ENCODE measurements at regions of chr1 and their contacts with region 1.

Region 1: DNA sequence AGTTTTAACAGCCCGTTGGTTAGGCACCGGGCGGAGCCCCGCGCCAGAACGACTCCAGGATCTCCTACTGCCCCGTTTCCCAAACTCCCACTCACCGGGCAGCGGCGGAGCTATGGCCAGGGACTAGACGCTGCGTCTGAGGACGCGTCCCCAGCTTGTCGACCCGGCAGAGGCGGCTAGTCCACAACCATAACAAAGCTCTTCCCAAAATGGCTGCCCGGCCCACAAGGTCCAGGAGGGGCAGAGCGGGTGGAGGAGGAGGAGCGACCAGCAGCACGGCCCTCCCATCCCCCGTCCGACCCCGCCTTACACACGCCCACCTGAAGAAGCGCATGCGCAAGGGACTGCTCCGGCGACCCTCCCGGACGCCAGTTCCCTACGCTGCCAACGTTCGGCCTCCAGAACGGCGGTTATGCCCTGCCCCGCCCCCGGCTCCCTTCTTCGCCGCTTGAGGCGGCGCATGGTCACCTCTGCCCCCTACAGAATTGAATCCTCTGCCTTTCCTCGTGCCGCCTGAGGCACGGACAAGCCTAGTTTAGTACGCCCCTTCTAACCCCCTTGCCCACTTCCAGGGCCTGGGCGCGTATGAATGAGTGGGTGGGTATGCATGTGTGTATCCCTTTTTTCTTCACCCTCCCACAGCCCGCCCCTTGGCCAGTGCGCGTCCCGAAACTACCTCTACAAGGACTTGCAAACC is at the start of gene GPBP1L1:
- DNase-seq: peak; percentile 97 to 98 (median 97)
- H3K4me3 ChIP-seq: peak within 1 kb of the TSS; percentile 99 to 100
- H3K4me3 Mint-ChIP-seq: peak within 1 kb of the TSS; percentile 95 to 100 (median 99)
- H3K27ac ChIP-seq: peak within 1 kb of the TSS; percentile 94
- H3K27ac Mint-ChIP-seq: peak within 1 kb of the TSS; percentile 98 to 100 (median 100)
- H3K4me1 ChIP-seq: peaks cover 63% of the 10 kb centered on the region
- H3K4me1 Mint-ChIP-seq: peaks cover 28 to 68% (median 46%) of the 10 kb centered on the region in 4 donors
- H3K27me3 ChIP-seq: no peaks in the 10 kb centered on the region
- H3K27me3 Mint-ChIP-seq: no peaks in the 10 kb centered on the region
- total RNA-seq, gene GPBP1L1: 175 to 187 TPM

Region 2: GRCh38 chr1:44674113-44675000 is 1012.1 kb before region 1 on chr1 and contains the starts of genes ARMH1 and TMEM53:
- CTCF ChIA-PET with region 1: no interaction called
- POLR2A ChIA-PET with region 1: interaction called, 3 read pairs
- intact Hi-C with region 1: loop called (anchors 2 kb)
- DNase-seq: peak; percentile 96 to 98 (median 97)
- H3K4me3 ChIP-seq: peak within 1 kb of the TSS; percentile 62 to 95
- H3K4me3 Mint-ChIP-seq: peak within 1 kb of the TSS; percentile 89 to 95 (median 90)
- H3K27ac ChIP-seq: peak within 1 kb of the TSS; percentile 74
- H3K27ac Mint-ChIP-seq: peak within 1 kb of the TSS; percentile 87 to 94 (median 93)
- H3K4me1 ChIP-seq: peaks cover 25% of the 10 kb centered on the region
- H3K4me1 Mint-ChIP-seq: peaks cover 11 to 31% (median 23%) of the 10 kb centered on the region in 4 donors
- H3K27me3 ChIP-seq: no peaks in the 10 kb centered on the region
- H3K27me3 Mint-ChIP-seq: no peaks in the 10 kb centered on the region
- total RNA-seq, gene ARMH1: 64.0 to 74.5 TPM
- total RNA-seq, gene TMEM53: 1.7 to 2.2 TPM

Region 3: DNA sequence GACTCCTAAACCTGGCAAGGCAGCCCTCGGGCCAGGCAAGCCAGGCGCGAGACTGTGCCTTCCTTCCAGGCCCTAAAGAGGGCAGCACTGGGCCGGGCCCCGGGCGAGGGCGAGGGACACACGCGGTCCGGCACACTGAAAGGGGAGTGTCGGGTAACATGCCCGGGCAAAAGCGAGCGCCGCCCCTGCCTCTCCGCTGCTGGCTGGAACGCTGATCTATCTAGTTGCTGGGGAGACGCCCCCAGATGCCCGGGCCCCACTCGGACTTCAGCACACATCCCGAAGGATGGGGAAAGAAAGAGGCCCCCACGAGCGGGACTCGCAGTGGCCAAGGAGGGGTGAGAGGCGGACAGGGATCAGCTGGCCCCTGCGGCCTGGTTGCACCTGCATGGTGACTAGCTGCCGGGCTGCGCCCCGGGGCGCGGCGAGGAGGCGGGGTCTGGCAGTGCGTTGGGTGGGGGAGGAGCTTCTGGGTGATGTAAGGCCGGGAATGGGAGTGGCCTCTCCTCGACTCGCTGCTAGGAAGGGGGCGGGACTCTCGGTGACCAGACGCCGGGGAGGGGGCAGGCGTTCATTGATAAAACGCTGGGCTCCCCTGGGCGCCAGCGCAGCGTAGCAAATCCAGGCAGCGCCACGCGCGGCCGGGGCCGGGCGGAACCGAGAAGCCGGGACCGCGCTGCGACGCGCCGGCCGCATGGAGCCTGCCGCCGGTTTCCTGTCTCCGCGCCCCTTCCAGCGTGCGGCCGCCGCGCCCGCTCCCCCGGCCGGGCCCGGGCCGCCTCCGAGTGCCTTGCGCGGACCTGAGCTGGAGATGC is 886.5 kb before region 1 on chr1 and contains the start of gene PLK3:
- CTCF ChIA-PET with region 1: no interaction called
- POLR2A ChIA-PET with region 1: interaction called, 4 read pairs
- intact Hi-C with region 1: loop called (anchors 5 kb)
- DNase-seq: peak; percentile 99 to 100 (median 99)
- H3K4me3 ChIP-seq: peak within 1 kb of the TSS; percentile 77 to 83
- H3K4me3 Mint-ChIP-seq: peak within 1 kb of the TSS; percentile 89 to 99 (median 96)
- H3K27ac ChIP-seq: peak within 1 kb of the TSS; percentile 96
- H3K27ac Mint-ChIP-seq: peak within 1 kb of the TSS; percentile 82 to 100 (median 99)
- H3K4me1 ChIP-seq: peaks cover 37% of the 10 kb centered on the region
- H3K4me1 Mint-ChIP-seq: peaks cover 23 to 48% (median 31%) of the 10 kb centered on the region in 4 donors
- H3K27me3 ChIP-seq: no peaks in the 10 kb centered on the region
- H3K27me3 Mint-ChIP-seq: no peaks in the 10 kb centered on the region
- total RNA-seq, gene PLK3: 151 to 153 TPM

Region 4: DNA sequence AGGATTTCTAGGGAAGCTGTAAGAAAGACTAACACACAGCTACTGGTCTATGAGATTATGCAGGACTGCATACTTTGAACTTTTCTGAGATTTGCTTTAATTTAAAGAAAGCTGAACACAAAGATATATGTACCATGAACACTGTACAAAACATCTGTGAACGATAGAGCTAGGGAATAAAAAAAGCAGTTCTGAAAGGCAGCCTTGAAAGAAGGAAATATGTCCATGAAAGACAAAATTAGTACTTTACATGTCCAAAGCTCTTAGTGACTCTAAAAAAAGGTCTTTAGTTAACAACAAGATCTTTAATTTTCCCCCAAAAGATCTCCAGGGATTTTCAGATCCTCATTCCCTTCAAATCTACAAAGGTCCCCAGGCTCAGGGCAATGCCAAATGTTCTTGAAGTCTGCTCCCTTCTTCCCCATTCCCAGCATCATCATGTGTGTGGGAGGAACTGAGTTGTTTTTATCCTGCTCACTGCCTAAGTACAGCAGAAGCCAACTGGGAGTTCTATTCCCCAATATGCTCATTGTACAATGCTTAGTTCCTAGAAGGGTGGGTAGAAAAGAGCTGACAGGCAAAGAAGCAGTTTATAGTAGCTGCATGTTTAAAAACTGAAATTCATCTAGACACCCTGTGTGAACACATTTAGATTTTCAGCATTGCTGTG is 783.3 kb before region 1 on chr1:
- CTCF ChIA-PET with region 1: no interaction called
- POLR2A ChIA-PET with region 1: no interaction called
- intact Hi-C with region 1: no loop called
- DNase-seq: no peak
- H3K4me3 ChIP-seq: no peak overlapping the region
- H3K4me3 Mint-ChIP-seq: no peak overlapping the region
- H3K27ac ChIP-seq: no peak overlapping the region
- H3K27ac Mint-ChIP-seq: peak overlapping the region in 1 of 7 donors; percentile 64
- H3K4me1 ChIP-seq: no peaks in the 10 kb centered on the region
- H3K4me1 Mint-ChIP-seq: no peaks in the 10 kb centered on the region
- H3K27me3 ChIP-seq: no peaks in the 10 kb centered on the region
- H3K27me3 Mint-ChIP-seq: no peaks in the 10 kb centered on the region

Region 5: DNA sequence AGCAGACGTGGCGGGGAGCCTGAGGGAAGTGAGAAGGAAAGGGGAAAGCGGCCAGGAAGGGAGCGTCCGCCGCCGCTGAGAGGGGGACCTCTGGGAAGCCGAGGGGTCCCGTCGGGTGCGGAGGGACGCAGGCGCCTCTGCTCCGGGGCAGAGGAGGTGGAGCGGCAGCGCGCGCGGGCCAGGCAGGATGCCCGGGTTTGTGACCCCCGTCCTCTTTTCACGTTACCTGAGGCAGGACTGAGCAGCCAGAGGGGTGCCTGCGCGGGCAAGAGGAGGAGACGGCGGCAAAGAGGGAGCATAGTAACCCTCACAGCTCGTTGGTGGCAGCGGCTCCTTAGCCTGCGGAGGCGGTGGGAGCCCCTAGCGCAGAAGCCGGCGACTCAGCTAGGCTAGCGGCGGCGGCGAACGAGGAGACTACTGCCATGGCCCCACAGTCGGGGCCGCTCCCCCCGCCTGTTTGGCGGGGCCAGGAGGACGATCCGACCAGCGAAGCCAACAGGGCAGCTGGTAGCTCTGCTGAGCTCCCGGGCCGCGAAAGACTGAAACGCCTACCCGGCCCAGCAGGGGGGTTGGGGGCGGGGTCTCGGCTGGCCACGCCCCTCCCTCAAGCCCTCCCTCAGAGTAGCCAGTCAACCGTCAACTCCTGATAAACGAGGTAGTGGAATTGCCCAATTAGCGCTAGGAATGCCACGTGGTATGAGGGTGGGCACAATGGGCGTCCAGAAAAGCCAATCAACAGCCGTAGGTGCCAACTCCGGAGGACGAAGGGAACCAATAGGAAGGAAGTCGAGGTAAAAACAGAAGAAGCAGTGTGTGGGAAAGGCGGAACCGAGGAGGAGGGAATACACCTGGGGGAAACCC is 195.6 kb before region 1 on chr1 and contains the start of gene TESK2:
- CTCF ChIA-PET with region 1: interaction called, 3 read pairs
- POLR2A ChIA-PET with region 1: interaction called, 15 read pairs
- intact Hi-C with region 1: no loop called
- DNase-seq: peak; percentile 97 to 100 (median 99)
- H3K4me3 ChIP-seq: peak within 1 kb of the TSS; percentile 71 to 79
- H3K4me3 Mint-ChIP-seq: no peak within 1 kb of the TSS
- H3K27ac ChIP-seq: peak within 1 kb of the TSS; percentile 68
- H3K27ac Mint-ChIP-seq: no peak within 1 kb of the TSS
- H3K4me1 ChIP-seq: peaks cover 22% of the 10 kb centered on the region
- H3K4me1 Mint-ChIP-seq: peaks cover 5 to 13% (median 10%) of the 10 kb centered on the region in 4 donors
- H3K27me3 ChIP-seq: no peaks in the 10 kb centered on the region
- H3K27me3 Mint-ChIP-seq: no peaks in the 10 kb centered on the region
- total RNA-seq, gene TESK2: 7.5 to 7.7 TPM

Region 6: GRCh38 chr1:45583264-45583665 is 103.2 kb before region 1 on chr1:
- CTCF ChIA-PET with region 1: interaction called, 4 read pairs
- POLR2A ChIA-PET with region 1: interaction called, 72 read pairs
- intact Hi-C with region 1: loop called (anchors 1 kb)
- DNase-seq: peak; percentile 95 to 97 (median 96)
- H3K4me3 ChIP-seq: peak overlapping the region; percentile 99
- H3K4me3 Mint-ChIP-seq: peak overlapping the region; percentile 93 to 100 (median 100)
- H3K27ac ChIP-seq: peak overlapping the region; percentile 88
- H3K27ac Mint-ChIP-seq: peak overlapping the region; percentile 94 to 100 (median 99)
- H3K4me1 ChIP-seq: peaks cover 26% of the 10 kb centered on the region
- H3K4me1 Mint-ChIP-seq: peaks cover 20 to 42% (median 28%) of the 10 kb centered on the region in 4 donors
- H3K27me3 ChIP-seq: no peaks in the 10 kb centered on the region
- H3K27me3 Mint-ChIP-seq: no peaks in the 10 kb centered on the region

Region 7: GRCh38 chr1:45621501-45621836 is 65.0 kb before region 1 on chr1:
- CTCF ChIA-PET with region 1: no interaction called
- POLR2A ChIA-PET with region 1: no interaction called
- intact Hi-C with region 1: no loop called
- DNase-seq: no peak
- H3K4me3 ChIP-seq: no peak overlapping the region
- H3K4me3 Mint-ChIP-seq: no peak overlapping the region
- H3K27ac ChIP-seq: no peak overlapping the region
- H3K27ac Mint-ChIP-seq: peak overlapping the region in 3 of 7 donors; percentile 12 to 81 (median 27)
- H3K4me1 ChIP-seq: no peaks in the 10 kb centered on the region
- H3K4me1 Mint-ChIP-seq: peaks cover 0 to 7% (median 2%) of the 10 kb centered on the region in 4 donors
- H3K27me3 ChIP-seq: no peaks in the 10 kb centered on the region
- H3K27me3 Mint-ChIP-seq: no peaks in the 10 kb centered on the region

Region 8: GRCh38 chr1:45803301-45803780 is 116.9 kb after region 1 on chr1 and contains the start of gene MAST2:
- CTCF ChIA-PET with region 1: no interaction called
- POLR2A ChIA-PET with region 1: interaction called, 5 read pairs
- intact Hi-C with region 1: loop called (anchors 2 kb)
- DNase-seq: peak; percentile 68 to 83 (median 79)
- H3K4me3 ChIP-seq: peak within 1 kb of the TSS in 1 of 2 donors; percentile 50
- H3K4me3 Mint-ChIP-seq: peak within 1 kb of the TSS; percentile 87 to 95 (median 91)
- H3K27ac ChIP-seq: no peak within 1 kb of the TSS
- H3K27ac Mint-ChIP-seq: peak within 1 kb of the TSS; percentile 62 to 93 (median 86)
- H3K4me1 ChIP-seq: peaks cover 16% of the 10 kb centered on the region
- H3K4me1 Mint-ChIP-seq: peaks cover 15 to 32% (median 22%) of the 10 kb centered on the region in 4 donors
- H3K27me3 ChIP-seq: no peaks in the 10 kb centered on the region
- H3K27me3 Mint-ChIP-seq: peaks cover 0 to 2% of the 10 kb centered on the region in 2 donors
- total RNA-seq, gene MAST2: 5.4 to 9.9 TPM

Region 9: GRCh38 chr1:46303038-46303871 is 616.8 kb after region 1 on chr1 and contains the starts of genes LRRC41 and UQCRH:
- CTCF ChIA-PET with region 1: no interaction called
- POLR2A ChIA-PET with region 1: interaction called, 10 read pairs
- intact Hi-C with region 1: loop called (anchors 5 kb)
- DNase-seq: peak; percentile 94 to 96 (median 94)
- H3K4me3 ChIP-seq: peak within 1 kb of the TSS; percentile 73 to 90
- H3K4me3 Mint-ChIP-seq: peak within 1 kb of the TSS; percentile 96 to 100 (median 98)
- H3K27ac ChIP-seq: peak within 1 kb of the TSS; percentile 94
- H3K27ac Mint-ChIP-seq: peak within 1 kb of the TSS; percentile 97 to 98 (median 98)
- H3K4me1 ChIP-seq: peaks cover 54% of the 10 kb centered on the region
- H3K4me1 Mint-ChIP-seq: peaks cover 26 to 64% (median 40%) of the 10 kb centered on the region in 4 donors
- H3K27me3 ChIP-seq: no peaks in the 10 kb centered on the region
- H3K27me3 Mint-ChIP-seq: no peaks in the 10 kb centered on the region
- total RNA-seq, gene LRRC41: 31.8 to 32.0 TPM
- total RNA-seq, gene UQCRH: 123 to 128 TPM

Measured in CD4-positive, alpha-beta memory T cell (primary cell).